ENCODE measurements at regions of chr1 and their contacts with region 1.

Region 1: DNA sequence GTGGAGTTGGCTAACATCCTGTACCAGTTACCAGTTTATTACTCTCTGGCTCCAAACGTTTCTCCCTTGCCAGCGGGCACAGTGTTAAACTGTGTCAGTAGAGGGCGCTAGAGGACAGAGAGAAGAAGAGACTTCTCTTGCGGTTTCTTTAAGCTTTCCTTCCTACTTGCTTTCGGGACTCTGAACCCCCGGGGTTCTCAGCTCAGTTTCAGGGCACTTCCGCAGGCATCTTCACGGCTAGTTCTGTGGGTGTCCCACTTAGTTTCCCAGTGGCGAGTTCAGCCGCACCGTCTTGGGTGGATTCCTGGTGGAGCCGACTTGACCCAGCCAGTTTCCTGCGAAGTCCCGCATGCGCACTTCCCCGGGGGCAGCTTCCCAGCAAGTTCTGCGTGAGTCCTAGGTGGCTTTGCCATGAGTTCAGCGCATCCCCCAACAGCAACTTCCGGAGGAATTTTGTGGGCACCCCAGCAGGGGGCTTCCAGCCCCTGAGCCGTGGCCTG is 37.9 kb upstream of the BTG2 start:
- DNase-seq: peak; percentile 77
- ATAC-seq: peak; percentile 70
- H3K4me3 ChIP-seq: peak overlapping the region; percentile 39 to 46
- H3K27ac ChIP-seq: peak overlapping the region; percentile 49
- H3K4me1 ChIP-seq: peaks cover 0 to 20% of the 10 kb centered on the region in 2 experiments; a peak in 2 of 4 replicates
- H3K27me3 ChIP-seq: no peaks in the 10 kb centered on the region
- CTCF ChIP-seq: peak; percentile 87 to 93 (median 90)
- POLR2A ChIP-seq: peak; percentile 30
- RAD21 ChIP-seq: peak; percentile 82

Region 2: GRCh38 chr1:203031467-203031866 is 235.9 kb before region 1 on chr1:
- CTCF ChIA-PET with region 1: interaction called, 51 read pairs
- POLR2A ChIA-PET with region 1: no interaction called
- RAD21 ChIA-PET with region 1: interaction called in 1 of 2 experiments, 4 read pairs
- intact Hi-C with region 1: loop called (anchors 2 kb)
- DNase-seq: no peak
- ATAC-seq: no peak
- H3K4me3 ChIP-seq: no peak overlapping the region
- H3K27ac ChIP-seq: no peak overlapping the region
- H3K4me1 ChIP-seq: peaks cover 4 to 6% of the 10 kb centered on the region in 2 experiments; a peak in 1 of 4 replicates
- H3K27me3 ChIP-seq: no peaks in the 10 kb centered on the region
- CTCF ChIP-seq: peak; percentile 36 to 87 (median 49); a peak in 5 of 6 replicates
- POLR2A ChIP-seq: no peak
- RAD21 ChIP-seq: peak; percentile 30; the same call in 1 of the 2 replicates

Region 3: DNA sequence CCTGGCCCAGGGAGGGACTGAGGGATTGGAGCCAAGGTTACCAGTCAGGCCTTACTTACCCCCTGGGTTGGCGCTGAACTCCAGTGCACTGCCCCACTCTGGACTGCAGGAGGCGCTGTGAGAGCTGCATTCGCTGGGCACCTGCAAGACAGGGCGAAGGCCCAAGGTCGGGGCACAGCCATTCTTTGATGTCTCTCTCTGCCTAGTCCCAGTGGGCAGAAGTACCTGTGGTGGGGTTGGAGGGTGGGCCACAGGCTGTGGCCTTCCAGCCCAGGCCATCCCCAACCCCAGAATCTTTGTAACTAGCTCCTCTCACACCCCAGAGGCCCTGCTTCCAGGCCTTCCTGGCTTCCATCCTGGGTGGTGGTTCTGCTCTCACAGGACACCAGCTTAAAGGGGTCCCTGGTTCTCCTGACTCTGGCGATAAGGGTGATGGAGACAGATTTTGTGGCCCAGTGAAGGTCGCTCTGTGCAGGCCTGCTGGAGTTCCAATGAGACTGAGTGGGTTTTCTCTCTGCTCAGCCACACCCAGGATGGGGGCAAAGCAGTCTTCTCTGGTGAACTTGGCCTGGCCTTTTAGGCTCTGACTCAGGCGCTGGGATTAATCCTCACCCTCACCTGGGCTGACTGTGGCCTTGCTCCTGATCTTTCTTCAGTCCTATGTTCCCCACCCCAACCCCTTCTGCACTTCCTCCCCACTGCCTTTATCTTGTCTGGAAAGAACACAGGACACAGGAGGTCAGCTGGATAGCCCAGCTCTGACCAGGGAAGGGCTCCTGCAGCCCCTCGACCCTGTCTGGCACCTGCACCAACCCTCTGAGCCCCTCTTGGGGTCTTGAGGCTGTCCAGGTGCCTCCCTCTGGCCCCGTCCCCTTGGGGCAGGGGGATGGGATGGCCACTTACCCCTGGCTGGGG is 182.6 kb before region 1 on chr1:
- CTCF ChIA-PET with region 1: interaction called, 20 read pairs
- POLR2A ChIA-PET with region 1: no interaction called
- RAD21 ChIA-PET with region 1: no interaction called
- intact Hi-C with region 1: no loop called
- DNase-seq: no peak
- ATAC-seq: peak; percentile 88
- H3K4me3 ChIP-seq: no peak overlapping the region
- H3K27ac ChIP-seq: no peak overlapping the region
- H3K4me1 ChIP-seq: no peaks in the 10 kb centered on the region
- H3K27me3 ChIP-seq: no peaks in the 10 kb centered on the region
- CTCF ChIP-seq: peak; percentile 33 to 91 (median 89); a peak in 5 of 6 replicates
- POLR2A ChIP-seq: no peak
- RAD21 ChIP-seq: peak; percentile 63

Region 4: DNA sequence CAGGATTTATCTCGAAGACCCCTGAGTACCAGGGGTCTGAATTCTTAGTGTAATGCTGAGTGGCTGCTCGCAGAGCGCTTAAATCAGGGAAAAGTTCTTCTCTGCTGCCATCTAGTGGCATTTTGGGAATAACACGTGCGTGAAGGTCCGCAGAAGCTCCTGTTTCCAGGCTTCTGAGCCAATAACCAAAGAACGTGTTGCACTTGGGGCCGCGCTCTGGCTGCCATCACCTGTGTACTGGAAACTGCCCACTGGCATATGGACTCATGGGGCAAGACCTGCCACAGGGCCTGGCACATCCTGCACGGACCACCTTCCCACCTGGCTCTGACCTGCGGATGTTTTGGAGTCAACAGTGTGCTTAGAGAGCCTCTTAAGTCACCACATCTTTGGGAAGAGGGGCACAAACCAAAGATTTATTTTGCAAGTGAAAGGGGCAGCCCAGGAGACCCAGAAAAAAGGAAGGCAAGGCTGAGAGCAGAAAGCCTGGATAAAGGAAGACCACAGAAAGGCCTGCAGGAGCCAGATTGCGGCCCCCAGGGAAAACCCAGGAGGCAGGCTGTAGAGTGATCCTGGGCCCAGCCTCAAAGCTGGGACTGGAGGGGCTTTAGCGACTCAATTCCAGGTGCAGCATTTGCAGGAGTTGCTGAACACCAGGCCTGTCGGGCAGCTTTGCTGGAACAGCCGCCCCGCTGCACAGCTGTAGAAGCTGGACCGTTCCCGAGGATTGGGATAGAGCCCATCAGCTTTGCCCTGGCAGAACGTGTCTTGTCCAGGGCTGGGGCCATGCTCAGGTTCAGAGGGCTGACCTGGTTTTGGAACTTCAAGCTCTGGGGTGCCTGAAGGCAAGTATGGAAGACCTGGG is 50.9 kb before region 1 on chr1:
- CTCF ChIA-PET with region 1: interaction called, 14 read pairs
- POLR2A ChIA-PET with region 1: no interaction called
- RAD21 ChIA-PET with region 1: interaction called in 1 of 2 experiments, 3 read pairs
- intact Hi-C with region 1: no loop called
- DNase-seq: peak; percentile 60
- ATAC-seq: peak; percentile 80
- H3K4me3 ChIP-seq: no peak overlapping the region
- H3K27ac ChIP-seq: no peak overlapping the region
- H3K4me1 ChIP-seq: peaks cover 0 to 12% of the 10 kb centered on the region in 2 experiments; a peak in 1 of 4 replicates
- H3K27me3 ChIP-seq: no peaks in the 10 kb centered on the region
- CTCF ChIP-seq: peak; percentile 59 to 94 (median 80)
- POLR2A ChIP-seq: no peak
- RAD21 ChIP-seq: peak; percentile 94

Region 5: DNA sequence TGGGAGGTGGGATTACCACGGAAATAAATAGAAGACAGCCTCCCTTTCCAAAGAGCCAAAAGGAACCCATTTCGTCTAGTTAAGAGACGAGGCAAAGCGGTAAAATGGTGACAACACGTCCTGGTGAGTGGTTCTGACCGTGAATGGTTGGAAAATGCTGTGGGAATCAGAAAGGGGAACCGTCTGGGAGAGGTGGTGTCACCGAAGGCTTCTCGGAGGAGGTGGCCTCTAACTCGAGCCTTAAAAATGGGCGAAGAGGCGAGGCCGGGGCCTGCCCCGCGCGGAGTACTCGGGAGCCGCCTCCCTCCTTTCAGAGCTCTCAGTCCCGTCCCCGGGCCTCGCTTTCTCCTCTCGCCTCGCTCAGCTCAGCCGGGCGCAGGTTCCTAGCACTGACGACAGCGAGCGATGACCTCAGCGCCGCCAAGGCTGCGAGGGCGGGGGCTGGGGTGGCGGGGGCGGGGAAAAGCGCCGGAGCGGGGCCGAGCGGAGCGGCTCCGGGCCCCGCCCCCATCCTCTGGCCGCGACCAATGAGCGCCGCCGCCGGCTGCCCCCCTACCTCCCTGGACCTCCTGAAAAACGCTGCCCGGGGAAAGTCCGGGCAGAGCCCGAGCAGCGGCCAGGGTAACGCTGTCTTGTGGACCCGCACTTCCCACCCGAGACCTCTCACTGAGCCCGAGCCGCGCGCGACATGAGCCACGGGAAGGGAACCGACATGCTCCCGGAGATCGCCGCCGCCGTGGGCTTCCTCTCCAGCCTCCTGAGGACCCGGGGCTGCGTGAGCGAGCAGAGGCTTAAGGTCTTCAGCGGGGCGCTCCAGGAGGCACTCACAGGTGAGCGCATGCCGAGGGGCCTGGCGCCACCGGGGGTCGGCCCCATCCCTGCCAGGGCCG is 37.8 kb after region 1 on chr1 and contains the start of gene BTG2:
- CTCF ChIA-PET with region 1: interaction called, 10 read pairs
- POLR2A ChIA-PET with region 1: interaction called, 3 read pairs
- RAD21 ChIA-PET with region 1: no interaction called
- intact Hi-C with region 1: no loop called
- DNase-seq: peak; percentile 66
- ATAC-seq: peak; percentile 89
- H3K4me3 ChIP-seq: peak within 1 kb of the TSS; percentile 89 to 97
- H3K27ac ChIP-seq: peak within 1 kb of the TSS; percentile 89
- H3K4me1 ChIP-seq: peaks cover 12 to 29% of the 10 kb centered on the region in 2 experiments; a peak in 3 of 4 replicates
- H3K27me3 ChIP-seq: no peaks in the 10 kb centered on the region
- CTCF ChIP-seq: no peak
- POLR2A ChIP-seq: peak; percentile 98
- RAD21 ChIP-seq: no peak
- total RNA-seq, gene BTG2: 24.2 TPM

Region 6: DNA sequence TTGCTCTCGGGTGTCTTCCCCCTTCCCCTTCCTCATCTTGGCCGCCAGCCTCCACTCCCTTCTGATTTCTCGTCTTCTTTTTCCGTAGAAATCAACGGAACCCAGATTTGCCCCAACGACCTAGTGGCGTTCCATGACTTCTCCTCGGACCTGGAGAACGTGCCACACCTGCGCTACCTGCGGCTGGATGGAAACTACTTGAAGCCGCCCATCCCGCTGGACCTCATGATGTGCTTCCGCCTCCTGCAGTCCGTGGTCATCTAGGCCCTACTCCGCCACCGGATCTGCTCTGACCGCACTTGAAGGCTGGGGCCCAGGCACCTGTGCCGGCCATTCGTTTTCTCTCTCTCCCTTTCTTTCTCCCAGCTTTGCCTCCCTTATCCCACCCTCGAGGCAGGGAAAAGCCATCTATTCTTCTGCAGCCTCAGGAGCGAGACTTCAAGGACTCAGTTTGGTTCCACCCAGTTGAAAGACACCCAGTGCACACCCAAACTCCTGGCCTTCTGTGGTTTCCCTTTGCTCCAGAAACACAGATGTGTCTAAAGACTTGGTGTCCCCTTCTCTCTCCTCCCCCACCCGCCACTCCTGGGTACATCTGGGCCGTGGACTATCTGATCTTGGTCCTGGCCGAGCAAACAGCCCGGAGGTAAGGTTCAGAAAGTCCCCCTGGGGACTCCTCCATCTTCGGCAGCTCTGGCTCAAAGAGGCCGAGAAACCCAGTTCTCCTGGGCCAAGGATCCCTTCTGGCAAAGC is 219.4 kb after region 1 on chr1:
- CTCF ChIA-PET with region 1: interaction called, 10 read pairs
- POLR2A ChIA-PET with region 1: no interaction called
- RAD21 ChIA-PET with region 1: interaction called in 1 of 2 experiments, 5 read pairs
- intact Hi-C with region 1: no loop called
- DNase-seq: no peak
- ATAC-seq: no peak
- H3K4me3 ChIP-seq: no peak overlapping the region; a peak in 1 of 4 replicates
- H3K27ac ChIP-seq: peak overlapping the region; percentile 50; the same call in 1 of the 2 replicates
- H3K4me1 ChIP-seq: peaks cover 4 to 12% of the 10 kb centered on the region in 2 experiments; a peak in 2 of 4 replicates
- H3K27me3 ChIP-seq: no peaks in the 10 kb centered on the region
- CTCF ChIP-seq: no peak
- POLR2A ChIP-seq: no peak
- RAD21 ChIP-seq: no peak

Region 7: GRCh38 chr1:203549309-203549708 is 281.9 kb after region 1 on chr1:
- CTCF ChIA-PET with region 1: no interaction called
- POLR2A ChIA-PET with region 1: no interaction called
- RAD21 ChIA-PET with region 1: no interaction called
- intact Hi-C with region 1: no loop called
- DNase-seq: no peak
- ATAC-seq: peak; percentile 73
- H3K4me3 ChIP-seq: no peak overlapping the region
- H3K27ac ChIP-seq: no peak overlapping the region
- H3K4me1 ChIP-seq: peaks cover 7 to 13% of the 10 kb centered on the region in 2 experiments
- H3K27me3 ChIP-seq: no peaks in the 10 kb centered on the region
- CTCF ChIP-seq: no peak
- POLR2A ChIP-seq: no peak
- RAD21 ChIP-seq: no peak

Measured in HCT116 (cell line).